BJ (cell line): ENCODE measurements at regions of chr11 and their contacts with region 1.

Region 1: GRCh38 chr11:93005239-93005638 is 35.8 kb downstream of the MTNR1B start:
- DNase-seq: no peak
- H3K4me3 ChIP-seq: no peak overlapping the region
- H3K27me3 ChIP-seq: no peaks in the 10 kb centered on the region
- CTCF ChIP-seq: no peak

Region 2: GRCh38 chr11:93017821-93018690 is 12.8 kb after region 1 on chr11:
- CTCF ChIA-PET with region 1: interaction called, 10 read pairs
- POLR2A ChIA-PET with region 1: no interaction called
- DNase-seq: no peak
- H3K4me3 ChIP-seq: no peak overlapping the region
- H3K27me3 ChIP-seq: no peaks in the 10 kb centered on the region
- CTCF ChIP-seq: no peak